ENCODE measurements at regions of chr21 and their contacts with region 1.

Region 1: DNA sequence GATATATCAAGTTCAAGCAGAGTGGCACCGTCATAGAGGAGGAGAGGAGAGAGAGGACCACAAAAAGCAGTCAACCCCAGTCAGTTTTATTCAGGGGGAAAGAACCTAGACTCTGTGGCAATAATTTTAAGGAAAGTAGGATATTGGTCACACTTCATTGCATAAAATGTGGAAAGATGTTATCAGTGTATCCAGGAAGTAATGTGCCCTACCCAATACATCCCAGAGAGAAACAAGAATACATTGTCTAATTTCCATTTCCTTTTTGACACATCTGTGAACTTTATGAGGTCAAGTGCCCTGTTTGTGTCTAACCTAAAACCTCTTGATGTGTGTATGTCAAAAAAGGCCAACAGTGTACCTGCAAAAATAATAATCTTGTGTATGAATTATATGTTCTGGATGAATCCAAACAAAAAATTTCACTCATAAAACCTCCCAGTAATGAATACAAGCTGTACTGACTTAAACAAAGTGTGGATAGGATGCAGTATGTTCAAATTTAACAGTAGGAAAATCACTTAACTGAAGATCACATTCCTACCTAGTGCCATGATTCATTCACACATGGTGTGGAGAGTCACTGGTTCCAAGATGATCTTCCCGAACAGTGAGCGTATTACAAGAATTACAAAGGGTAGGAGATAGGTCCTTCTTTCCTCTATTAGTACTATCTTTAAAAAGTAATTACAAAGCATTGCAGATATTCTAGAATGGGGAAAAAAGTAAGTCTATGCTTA is 712.1 kb upstream of the CXADR start:
- DNase-seq: no peak
- ATAC-seq: no peak
- H3K4me3 Mint-ChIP-seq: no peak overlapping the region
- H3K27ac Mint-ChIP-seq: no peak overlapping the region
- H3K4me1 Mint-ChIP-seq: no peaks in the 10 kb centered on the region
- H3K27me3 Mint-ChIP-seq: no peaks in the 10 kb centered on the region

Region 2: DNA sequence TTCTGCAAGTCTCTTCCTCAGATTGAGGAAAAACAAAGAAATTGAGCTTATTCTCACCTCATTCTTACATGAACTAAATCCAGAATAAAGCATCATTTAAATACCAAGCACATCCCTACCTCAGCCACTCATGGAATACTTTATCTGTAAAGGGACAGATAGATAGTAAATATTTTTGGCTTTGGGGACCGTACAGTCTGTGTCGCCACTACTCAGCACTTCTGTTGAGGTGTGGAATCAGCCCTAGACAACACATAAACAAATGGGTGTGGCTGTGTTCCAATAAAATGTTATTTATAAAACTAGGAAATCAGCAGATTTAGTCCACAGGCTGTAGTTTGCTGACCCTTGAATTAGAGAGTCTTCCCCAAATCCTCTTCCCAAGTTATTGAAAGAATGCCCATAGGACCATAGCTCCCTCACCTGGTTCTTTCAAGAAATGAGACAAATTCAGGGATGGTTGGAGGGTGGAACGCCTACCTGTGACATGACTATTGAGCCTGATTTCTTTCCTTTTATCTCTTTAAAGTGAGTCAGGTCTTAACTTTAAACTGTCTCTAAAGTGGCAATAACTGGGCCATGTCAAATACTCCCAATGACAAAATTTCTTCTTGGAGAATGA is 192.4 kb before region 1 on chr21:
- CTCF ChIA-PET with region 1: no interaction called
- POLR2A ChIA-PET with region 1: no interaction called
- intact Hi-C with region 1: no loop called
- DNase-seq: no peak
- ATAC-seq: no peak
- H3K4me3 Mint-ChIP-seq: no peak overlapping the region
- H3K27ac Mint-ChIP-seq: no peak overlapping the region
- H3K4me1 Mint-ChIP-seq: no peaks in the 10 kb centered on the region
- H3K27me3 Mint-ChIP-seq: no peaks in the 10 kb centered on the region

Region 3: DNA sequence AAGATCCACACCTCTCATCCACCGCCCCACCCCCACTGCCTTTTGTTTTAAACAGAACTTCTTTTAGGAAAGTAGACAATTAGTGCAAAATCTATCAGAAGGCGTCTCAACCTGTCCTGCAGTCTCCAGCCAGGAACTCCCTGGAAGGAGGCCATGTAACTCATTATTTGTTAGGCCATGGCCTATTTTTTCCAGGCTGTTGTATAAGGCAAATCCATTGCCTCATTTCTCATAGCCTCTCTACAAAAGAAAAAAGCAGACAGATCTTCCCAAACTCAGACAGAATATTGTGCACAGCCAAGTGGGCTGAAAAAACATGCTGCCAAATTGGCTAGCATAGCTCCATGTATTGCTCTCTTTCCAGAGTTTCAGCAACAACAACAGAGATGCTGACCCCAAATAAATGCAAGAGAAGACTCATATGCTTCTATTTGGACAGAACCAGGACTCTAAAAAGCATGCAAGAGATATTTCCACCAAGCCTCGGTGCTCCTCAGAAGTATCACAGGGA is 58.5 kb before region 1 on chr21:
- CTCF ChIA-PET with region 1: no interaction called
- POLR2A ChIA-PET with region 1: no interaction called
- intact Hi-C with region 1: loop called in 1 of 2 experiments (anchors 10 kb)
- DNase-seq: no peak
- ATAC-seq: no peak
- H3K4me3 Mint-ChIP-seq: no peak overlapping the region
- H3K27ac Mint-ChIP-seq: no peak overlapping the region
- H3K4me1 Mint-ChIP-seq: no peaks in the 10 kb centered on the region
- H3K27me3 Mint-ChIP-seq: no peaks in the 10 kb centered on the region

Region 4: DNA sequence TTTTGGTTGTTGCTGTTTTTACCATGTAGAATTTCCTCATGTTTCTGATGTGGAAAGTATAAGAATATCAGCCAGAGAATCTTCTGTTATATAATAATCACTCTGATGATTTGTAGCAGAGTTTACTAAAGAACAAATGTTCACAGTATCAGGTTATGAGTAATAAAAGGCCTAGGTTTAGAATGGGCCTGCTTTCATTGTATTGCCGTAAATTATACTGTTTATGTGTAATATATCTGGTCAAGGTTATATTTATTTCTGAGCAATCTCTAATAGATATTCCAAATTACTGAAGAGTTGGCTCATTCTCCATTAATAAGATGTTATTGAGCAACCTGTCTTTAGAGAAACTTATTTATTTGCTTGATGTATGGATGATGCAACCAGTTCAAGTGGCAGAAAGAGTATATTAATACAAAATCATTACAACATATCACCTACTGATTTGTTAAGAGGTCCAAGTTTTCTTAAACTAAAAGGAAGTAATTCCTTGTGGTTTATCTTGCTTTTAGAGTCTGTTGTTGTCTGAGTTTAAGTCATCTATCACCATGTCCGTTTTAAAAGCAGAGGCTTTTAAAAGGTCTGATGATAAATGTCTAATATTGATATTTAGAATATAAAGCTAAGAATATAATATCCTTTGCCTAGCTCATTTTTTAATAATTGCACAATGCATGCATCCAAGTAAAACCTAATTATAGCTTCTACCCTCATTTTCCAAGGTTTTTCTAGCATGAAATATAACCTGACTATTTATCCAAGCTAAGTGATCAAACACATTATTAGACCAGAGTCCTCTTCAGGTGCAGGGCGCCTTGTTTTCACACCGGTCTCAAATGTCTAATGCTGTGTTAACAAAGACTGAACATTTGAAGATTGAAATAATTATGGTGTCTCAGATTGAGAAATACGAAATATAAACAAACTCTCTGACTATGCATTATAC is 62.9 kb after region 1 on chr21:
- CTCF ChIA-PET with region 1: no interaction called
- POLR2A ChIA-PET with region 1: no interaction called
- intact Hi-C with region 1: no loop called
- DNase-seq: no peak
- ATAC-seq: no peak
- H3K4me3 Mint-ChIP-seq: no peak overlapping the region
- H3K27ac Mint-ChIP-seq: no peak overlapping the region
- H3K4me1 Mint-ChIP-seq: no peaks in the 10 kb centered on the region
- H3K27me3 Mint-ChIP-seq: no peaks in the 10 kb centered on the region

Measured in activated CD4-positive, alpha-beta T cell treated with anti-CD3 and anti-CD28 coated beads for 36 hours (primary cell).